Heart right ventricle (tissue), 16 donors: ENCODE measurements at regions of chr1 and their contacts with region 1.

Region 1: DNA sequence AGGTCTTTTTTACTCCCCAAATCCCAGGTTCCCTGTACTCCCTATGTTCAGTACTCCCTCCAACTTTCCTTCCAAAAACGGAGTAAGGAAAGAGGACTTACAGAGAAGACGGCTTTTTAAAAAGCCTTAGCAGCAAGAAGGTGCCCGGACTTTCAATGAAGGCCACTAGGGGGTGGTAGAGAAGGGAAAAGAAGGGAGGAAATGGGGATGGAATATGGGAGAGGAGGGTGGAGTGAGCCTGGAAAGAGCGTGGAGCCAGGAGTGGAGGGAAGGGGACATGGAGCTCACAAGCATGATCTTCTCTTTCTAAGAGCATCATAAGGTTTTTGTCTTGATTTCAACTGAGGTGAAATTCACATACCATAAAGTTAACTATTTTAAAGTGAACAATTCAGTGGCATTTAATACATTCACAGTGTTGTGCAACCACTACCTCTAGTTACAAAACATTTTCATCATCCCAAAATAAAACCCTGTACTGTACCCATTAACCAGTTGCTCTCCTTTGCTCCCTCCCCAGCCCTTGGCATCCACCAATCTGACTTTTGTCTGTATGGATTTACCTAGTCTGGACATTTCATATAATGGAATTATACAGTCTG is 129.9 kb downstream of the ZNF281 start:
- DNase-seq: peak in 1 of 2 donors; percentile 16
- ATAC-seq: no peak
- H3K4me3 ChIP-seq: no peak overlapping the region
- H3K27ac ChIP-seq: no peak overlapping the region
- H3K4me1 ChIP-seq: peaks cover 0 to 9% (median 0%) of the 10 kb centered on the region in 9 donors
- H3K27me3 ChIP-seq: peaks cover 0 to 4% (median 0%) of the 10 kb centered on the region in 7 donors
- CTCF ChIP-seq: peak; percentile 17 to 66 (median 53)

Region 2: DNA sequence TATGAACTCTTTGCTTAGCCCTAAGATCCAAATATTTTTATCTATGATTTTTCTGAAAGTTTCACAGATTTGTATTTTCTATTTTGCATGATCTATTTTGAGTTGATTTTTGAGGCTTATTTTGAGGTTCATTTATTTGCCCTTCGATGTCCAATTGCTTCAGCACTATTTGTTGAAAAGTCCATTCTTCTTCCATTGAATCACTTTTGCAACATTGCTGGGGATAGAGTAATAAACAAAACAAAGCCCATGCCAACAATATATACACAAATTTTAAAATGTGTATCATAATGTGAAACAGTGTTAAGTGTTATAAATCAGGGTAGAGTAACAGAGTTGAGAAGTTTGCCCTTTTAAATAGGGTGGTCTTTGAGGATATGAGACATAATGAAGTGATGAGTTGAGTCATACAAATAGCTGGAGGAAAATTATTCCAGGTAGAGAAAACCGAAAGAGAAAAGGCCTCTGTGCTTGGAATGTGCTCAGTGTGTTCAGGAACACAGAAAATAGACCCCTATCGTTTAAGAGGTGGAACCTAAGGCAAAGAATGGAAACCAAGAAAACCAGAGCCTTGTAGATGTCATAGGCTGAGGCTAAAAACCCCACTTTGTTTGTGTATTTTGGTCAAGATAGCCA is 425.1 kb before region 1 on chr1:
- intact Hi-C with region 1: loop called in 1 of 10 experiments (anchors 5 kb)
- DNase-seq: no peak
- ATAC-seq: no peak
- H3K4me3 ChIP-seq: no peak overlapping the region
- H3K27ac ChIP-seq: no peak overlapping the region
- H3K4me1 ChIP-seq: peaks cover 0 to 36% (median 0%) of the 10 kb centered on the region in 9 donors
- H3K27me3 ChIP-seq: no peaks in the 10 kb centered on the region
- CTCF ChIP-seq: no peak

Region 3: DNA sequence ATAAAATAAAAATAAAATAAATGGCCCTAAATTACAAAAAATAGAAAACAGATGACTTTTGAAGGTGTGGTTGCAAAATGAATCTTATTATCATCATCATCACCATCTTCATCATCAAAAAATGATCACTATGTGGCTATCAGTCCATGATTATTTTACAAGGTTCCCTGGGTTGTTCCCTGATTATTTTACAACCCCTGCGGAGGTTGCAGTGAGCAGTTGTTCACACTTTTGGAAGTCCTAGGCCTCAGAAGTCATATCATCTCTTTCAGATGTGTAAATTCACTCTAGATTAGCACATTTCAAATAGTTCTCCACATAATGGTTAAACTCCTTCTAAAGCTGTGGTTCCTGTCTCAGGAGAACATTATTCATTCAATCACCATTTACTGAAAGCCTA is 309.8 kb before region 1 on chr1:
- intact Hi-C with region 1: no loop called
- DNase-seq: no peak
- ATAC-seq: no peak
- H3K4me3 ChIP-seq: no peak overlapping the region
- H3K27ac ChIP-seq: no peak overlapping the region
- H3K4me1 ChIP-seq: no peaks in the 10 kb centered on the region
- H3K27me3 ChIP-seq: peaks cover 0 to 7% (median 0%) of the 10 kb centered on the region in 7 donors
- CTCF ChIP-seq: no peak

Region 4: DNA sequence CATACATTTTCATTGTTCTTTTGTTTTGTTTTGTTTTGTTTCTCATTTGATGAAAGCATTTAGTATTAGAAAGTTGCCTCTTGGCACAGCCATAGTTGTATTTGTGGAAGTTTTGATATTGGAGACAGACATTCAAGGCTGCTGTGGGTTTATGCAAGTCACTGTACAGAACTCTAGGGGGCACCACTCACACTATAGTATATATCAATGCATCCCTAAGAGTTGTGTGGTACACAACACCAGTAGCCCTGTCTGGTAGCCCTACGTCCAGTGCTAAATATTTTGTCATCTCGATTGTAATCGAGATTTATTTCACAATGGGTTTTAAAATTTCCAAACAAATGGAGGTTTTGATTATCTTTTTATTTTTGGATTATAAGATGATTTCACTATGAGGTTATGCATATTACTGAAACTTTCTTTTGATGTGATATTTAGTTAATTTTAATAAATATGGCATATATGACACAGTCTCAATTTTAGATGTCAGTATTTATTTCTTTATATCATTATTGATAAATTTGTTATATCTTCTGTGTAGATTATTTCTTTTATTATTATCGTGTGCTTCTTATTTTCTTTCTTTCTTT is 140.2 kb before region 1 on chr1:
- intact Hi-C with region 1: loop called in 1 of 10 experiments (anchors 10 kb)
- DNase-seq: peak in 1 of 2 donors; percentile 4
- ATAC-seq: peak in 1 of 8 donors; percentile 55
- H3K4me3 ChIP-seq: no peak overlapping the region
- H3K27ac ChIP-seq: no peak overlapping the region
- H3K4me1 ChIP-seq: peaks cover 0 to 10% (median 0%) of the 10 kb centered on the region in 9 donors
- H3K27me3 ChIP-seq: no peaks in the 10 kb centered on the region
- CTCF ChIP-seq: peak in 7 of 9 donors; percentile 40 to 70 (median 53)